T-cell (primary cell): ENCODE measurements at regions of chr16 and their contacts with region 1.

Region 1: GRCh38 chr16:1942810-1943726 is at the start of gene MSRB1:
- DNase-seq: peak; percentile 94 to 100 (median 98)
- ATAC-seq: peak; percentile 97 to 99 (median 98)
- H3K4me3 ChIP-seq: peak within 1 kb of the TSS; percentile 70 to 90
- H3K4me3 Mint-ChIP-seq: peak within 1 kb of the TSS; percentile 80 to 89 (median 82)
- H3K27ac ChIP-seq: peak within 1 kb of the TSS; percentile 68
- H3K27ac Mint-ChIP-seq: peak within 1 kb of the TSS; percentile 63 to 85
- H3K4me1 ChIP-seq: peaks cover 2 to 22% of the 10 kb centered on the region in 2 experiments
- H3K4me1 Mint-ChIP-seq: peaks cover 6 to 23% (median 14%) of the 10 kb centered on the region in 3 donors
- H3K27me3 ChIP-seq: no peaks in the 10 kb centered on the region
- H3K27me3 Mint-ChIP-seq: no peaks in the 10 kb centered on the region
- total RNA-seq, gene MSRB1: 5.6 to 11.9 (median 9.6) TPM

Region 2: GRCh38 chr16:1964506-1965395 is 21.7 kb after region 1 on chr16 and contains the start of gene RPS2:
- CTCF ChIA-PET with region 1: no interaction called
- POLR2A ChIA-PET with region 1: interaction called, 11 to 12 read pairs
- DNase-seq: peak; percentile 93 to 100 (median 98)
- ATAC-seq: peak; percentile 86 to 89 (median 88)
- H3K4me3 ChIP-seq: peak within 1 kb of the TSS; percentile 83 to 95
- H3K4me3 Mint-ChIP-seq: peak within 1 kb of the TSS; percentile 91 to 93 (median 91)
- H3K27ac ChIP-seq: peak within 1 kb of the TSS; percentile 97
- H3K27ac Mint-ChIP-seq: peak within 1 kb of the TSS; percentile 95 to 96
- H3K4me1 ChIP-seq: peaks cover 12 to 55% of the 10 kb centered on the region in 2 experiments
- H3K4me1 Mint-ChIP-seq: peaks cover 37 to 49% (median 45%) of the 10 kb centered on the region in 3 donors
- H3K27me3 ChIP-seq: no peaks in the 10 kb centered on the region
- H3K27me3 Mint-ChIP-seq: no peaks in the 10 kb centered on the region
- total RNA-seq, gene RPS2: 3,208 to 3,662 (median 3,410) TPM